ENCODE measurements at regions of chr10 and their contacts with region 1.

Region 1: DNA sequence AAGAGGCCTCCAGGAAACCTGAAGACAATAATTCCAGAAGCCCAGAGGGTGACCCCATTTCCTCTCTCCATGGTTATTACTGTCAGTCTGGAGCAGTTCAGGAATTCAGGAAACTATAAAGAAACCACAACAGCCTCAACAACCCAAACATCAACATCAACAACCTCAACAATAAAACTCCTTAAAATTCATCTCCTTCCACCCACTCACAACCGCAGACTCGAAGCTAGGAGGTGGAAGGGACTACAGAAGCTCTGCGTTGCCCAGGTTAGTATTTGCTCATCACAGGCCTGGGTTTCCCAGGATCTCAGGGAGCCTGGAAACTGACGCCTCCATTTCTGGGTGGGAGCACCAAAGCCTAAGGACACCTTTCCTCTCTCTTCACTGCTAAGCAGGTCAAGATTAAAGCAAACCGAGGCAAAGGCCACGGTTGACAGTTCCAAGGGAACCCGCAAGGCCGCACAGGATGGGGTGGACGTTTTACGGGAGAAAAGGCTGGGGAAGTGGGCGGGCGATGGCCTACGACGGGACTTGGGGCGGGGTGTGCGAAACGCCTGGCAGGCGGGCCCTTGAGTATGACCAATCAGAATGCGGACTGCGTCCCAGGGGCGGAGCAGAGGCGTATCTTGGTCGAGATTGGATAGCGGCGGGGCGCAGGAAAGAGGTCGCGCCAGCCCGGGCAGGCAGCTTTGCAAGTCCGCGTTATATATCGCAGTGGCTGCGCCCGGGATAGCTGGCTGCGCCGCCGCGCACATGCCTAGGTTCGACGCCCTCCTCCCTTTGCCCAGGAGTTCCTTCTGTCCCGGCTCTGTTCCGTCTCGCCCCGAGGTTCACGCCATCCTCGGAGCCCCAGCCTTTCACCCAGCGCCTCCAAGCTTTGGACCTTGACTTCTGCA is at the start of gene ELOVL3:
- DNase-seq: peak; percentile 91
- ATAC-seq: peak; percentile 91
- H3K4me3 Mint-ChIP-seq: peak within 1 kb of the TSS; percentile 38
- H3K27ac Mint-ChIP-seq: no peak within 1 kb of the TSS
- H3K4me1 Mint-ChIP-seq: peaks cover 24% of the 10 kb centered on the region
- H3K27me3 Mint-ChIP-seq: peaks cover 39% of the 10 kb centered on the region
- total RNA-seq, gene ELOVL3: 0.14 TPM in 1 of 2 experiments, not detected in the other

Region 2: DNA sequence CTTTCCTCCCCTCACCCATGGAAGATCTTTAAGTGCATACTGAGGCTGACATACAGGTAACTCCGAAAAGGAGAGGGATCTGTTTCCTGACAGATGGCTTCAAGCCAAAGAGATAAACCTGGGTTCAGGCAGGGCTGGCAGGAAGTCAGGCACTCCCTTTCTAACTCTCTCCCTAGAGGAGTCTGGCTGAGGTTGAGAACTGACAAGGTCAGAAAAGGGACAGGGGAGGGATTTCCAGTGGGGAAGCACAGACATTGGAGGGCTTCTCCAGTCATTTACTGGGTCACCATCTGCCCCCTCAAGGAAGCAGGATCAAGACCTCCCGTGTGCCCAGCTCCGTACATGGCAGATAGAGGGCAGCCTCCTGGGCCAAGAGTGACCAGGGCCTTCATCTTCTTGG is 1063.2 kb before region 1 on chr10:
- CTCF ChIA-PET with region 1: no interaction called
- POLR2A ChIA-PET with region 1: no interaction called
- intact Hi-C with region 1: no loop called
- DNase-seq: no peak
- ATAC-seq: no peak
- H3K4me3 Mint-ChIP-seq: no peak overlapping the region
- H3K27ac Mint-ChIP-seq: no peak overlapping the region
- H3K4me1 Mint-ChIP-seq: peaks cover 10% of the 10 kb centered on the region
- H3K27me3 Mint-ChIP-seq: peaks cover 59% of the 10 kb centered on the region

Region 3: GRCh38 chr10:102167861-102168260 is 58.0 kb before region 1 on chr10:
- CTCF ChIA-PET with region 1: interaction called, 66 read pairs
- POLR2A ChIA-PET with region 1: interaction called, 14 read pairs
- intact Hi-C with region 1: loop called (anchors 1 kb)
- DNase-seq: no peak
- ATAC-seq: no peak
- H3K4me3 Mint-ChIP-seq: no peak overlapping the region
- H3K27ac Mint-ChIP-seq: no peak overlapping the region
- H3K4me1 Mint-ChIP-seq: peaks cover 4% of the 10 kb centered on the region
- H3K27me3 Mint-ChIP-seq: no peaks in the 10 kb centered on the region

Region 4: GRCh38 chr10:102280397-102281101 is 54.7 kb after region 1 on chr10:
- CTCF ChIA-PET with region 1: interaction called, 31 read pairs
- POLR2A ChIA-PET with region 1: no interaction called
- intact Hi-C with region 1: no loop called
- DNase-seq: no peak
- ATAC-seq: no peak
- H3K4me3 Mint-ChIP-seq: peak overlapping the region; percentile 0
- H3K27ac Mint-ChIP-seq: peak overlapping the region; percentile 72
- H3K4me1 Mint-ChIP-seq: peaks cover 59% of the 10 kb centered on the region
- H3K27me3 Mint-ChIP-seq: no peaks in the 10 kb centered on the region

Region 5: GRCh38 chr10:102352066-102352715 is 126.3 kb after region 1 on chr10:
- CTCF ChIA-PET with region 1: interaction called, 833 read pairs
- POLR2A ChIA-PET with region 1: interaction called, 23 read pairs
- intact Hi-C with region 1: loop called (anchors 1 kb)
- DNase-seq: peak; percentile 85
- ATAC-seq: peak; percentile 88
- H3K4me3 Mint-ChIP-seq: no peak overlapping the region
- H3K27ac Mint-ChIP-seq: no peak overlapping the region
- H3K4me1 Mint-ChIP-seq: no peaks in the 10 kb centered on the region
- H3K27me3 Mint-ChIP-seq: no peaks in the 10 kb centered on the region

Region 6: DNA sequence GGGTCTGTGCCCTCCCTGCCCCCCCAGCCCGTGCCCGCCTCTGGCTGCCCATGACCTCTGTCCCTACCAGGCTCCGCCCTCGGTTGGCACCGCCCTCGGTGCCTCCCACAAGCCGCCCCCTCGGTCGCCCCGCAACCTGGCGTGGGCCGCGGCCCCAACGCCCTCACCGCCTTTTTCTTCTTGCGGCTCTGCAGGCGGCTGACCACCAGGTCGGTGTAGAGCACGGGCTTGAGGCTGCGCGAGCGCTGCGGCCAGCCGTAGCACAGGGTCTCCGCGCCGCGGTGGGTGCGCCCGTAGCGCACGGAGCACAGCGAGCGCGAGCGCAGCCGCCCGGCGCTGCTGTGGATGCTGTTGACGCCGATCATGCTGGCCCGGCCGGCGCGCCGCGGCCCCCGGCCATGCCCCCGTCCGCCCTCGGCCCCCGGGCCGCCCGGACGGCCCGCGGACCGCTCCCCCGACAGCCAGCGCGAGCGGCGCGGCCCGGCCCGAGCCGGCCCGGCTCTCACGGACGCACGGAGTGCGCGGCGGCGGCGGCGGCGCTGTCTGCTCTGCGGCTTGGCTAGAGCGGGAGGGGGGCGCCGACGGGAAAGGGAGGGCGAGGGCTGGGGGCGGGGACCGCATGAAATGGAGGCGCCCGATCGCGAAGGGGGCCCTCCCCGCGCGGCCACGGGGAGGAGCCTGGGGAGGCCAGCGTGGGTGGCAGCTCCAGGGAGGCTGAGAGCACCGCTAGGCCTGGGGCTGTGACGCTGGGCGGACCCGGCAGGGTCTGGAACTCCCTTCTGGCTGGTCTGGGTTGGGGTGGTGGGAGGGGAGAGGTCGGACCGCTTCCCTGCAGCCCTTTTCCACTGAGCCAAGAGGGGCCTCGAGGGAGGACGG is 183.1 kb after region 1 on chr10:
- CTCF ChIA-PET with region 1: interaction called, 21 read pairs
- POLR2A ChIA-PET with region 1: interaction called, 3 read pairs
- intact Hi-C with region 1: no loop called
- DNase-seq: peak; percentile 91
- ATAC-seq: peak; percentile 69
- H3K4me3 Mint-ChIP-seq: peak overlapping the region; percentile 71
- H3K27ac Mint-ChIP-seq: peak overlapping the region; percentile 73
- H3K4me1 Mint-ChIP-seq: peaks cover 35% of the 10 kb centered on the region
- H3K27me3 Mint-ChIP-seq: peaks cover 14% of the 10 kb centered on the region

Region 7: GRCh38 chr10:102583435-102584417 is 357.8 kb after region 1 on chr10:
- CTCF ChIA-PET with region 1: interaction called, 24 read pairs
- POLR2A ChIA-PET with region 1: no interaction called
- intact Hi-C with region 1: loop called (anchors 1 to 5 kb)
- DNase-seq: peak; percentile 91
- ATAC-seq: peak; percentile 100
- H3K4me3 Mint-ChIP-seq: no peak overlapping the region
- H3K27ac Mint-ChIP-seq: no peak overlapping the region
- H3K4me1 Mint-ChIP-seq: peaks cover 9% of the 10 kb centered on the region
- H3K27me3 Mint-ChIP-seq: no peaks in the 10 kb centered on the region